Dendritic cell treated with granulocyte-macrophage colony-stimulating factor and Interleukin-4, amounts not matched to agents 40 ng/mL and 50 ng/mL, for 4 days (primary cell): ENCODE measurements at regions of chr16 and their contacts with region 1.

Region 1: GRCh38 chr16:31202414-31203375 is at the start of gene PYCARD:
- H3K4me3 Mint-ChIP-seq: peak within 1 kb of the TSS; percentile 87
- H3K27ac Mint-ChIP-seq: peak within 1 kb of the TSS; percentile 84
- H3K4me1 Mint-ChIP-seq: peaks cover 75% of the 10 kb centered on the region
- H3K27me3 Mint-ChIP-seq: peaks cover 8% of the 10 kb centered on the region

Region 2: GRCh38 chr16:30820952-30821760 is 381.5 kb before region 1 on chr16:
- intact Hi-C with region 1: no loop called
- H3K4me3 Mint-ChIP-seq: no peak overlapping the region
- H3K27ac Mint-ChIP-seq: no peak overlapping the region
- H3K4me1 Mint-ChIP-seq: peaks cover 6% of the 10 kb centered on the region
- H3K27me3 Mint-ChIP-seq: no peaks in the 10 kb centered on the region

Region 3: DNA sequence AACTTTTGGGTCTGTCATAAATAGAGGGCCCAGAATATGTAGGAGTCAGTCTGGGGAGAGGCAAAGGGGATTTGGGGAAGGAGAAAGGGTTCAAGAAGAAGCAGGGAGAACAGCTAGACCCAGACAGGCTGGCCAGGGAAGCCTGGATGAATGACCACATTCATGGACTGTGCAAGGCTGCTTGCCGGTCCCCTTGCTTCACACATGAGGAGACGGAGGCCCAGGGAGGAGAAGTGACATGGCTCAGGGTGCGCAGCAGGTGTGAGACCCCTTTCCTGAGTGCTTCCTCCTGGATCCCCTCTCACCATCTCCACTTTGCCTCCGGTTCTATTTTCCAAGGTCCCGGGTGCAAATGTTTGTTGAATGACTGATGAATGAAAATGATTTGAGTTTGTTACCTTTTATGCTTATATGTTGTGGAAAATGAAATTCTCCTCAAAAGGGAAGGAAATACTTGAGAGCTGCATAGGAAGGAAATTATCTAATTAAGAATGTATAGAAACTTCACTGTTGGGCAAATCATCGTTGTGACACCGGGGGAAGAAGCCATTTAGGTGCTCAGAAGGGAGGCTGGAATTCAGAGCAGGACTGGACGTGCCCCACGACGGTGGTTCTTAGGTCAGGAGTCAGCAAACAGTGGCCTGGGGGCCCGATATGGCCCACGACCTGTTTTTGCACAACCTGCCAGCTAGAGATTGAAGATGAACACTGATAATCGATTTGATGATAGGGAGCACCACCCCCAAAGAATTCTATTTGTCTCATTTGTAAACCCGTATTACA is 57.6 kb after region 1 on chr16:
- intact Hi-C with region 1: loop called (anchors 2 kb)
- H3K4me3 Mint-ChIP-seq: peak overlapping the region; percentile 100
- H3K27ac Mint-ChIP-seq: peak overlapping the region; percentile 91
- H3K4me1 Mint-ChIP-seq: peaks cover 71% of the 10 kb centered on the region
- H3K27me3 Mint-ChIP-seq: no peaks in the 10 kb centered on the region

Region 4: GRCh38 chr16:31365131-31365865 is 162.6 kb after region 1 on chr16:
- intact Hi-C with region 1: no loop called
- H3K4me3 Mint-ChIP-seq: no peak overlapping the region
- H3K27ac Mint-ChIP-seq: peak overlapping the region; percentile 50
- H3K4me1 Mint-ChIP-seq: peaks cover 73% of the 10 kb centered on the region
- H3K27me3 Mint-ChIP-seq: no peaks in the 10 kb centered on the region